ENCODE measurements at regions of chr11 and their contacts with region 1.

Region 1: DNA sequence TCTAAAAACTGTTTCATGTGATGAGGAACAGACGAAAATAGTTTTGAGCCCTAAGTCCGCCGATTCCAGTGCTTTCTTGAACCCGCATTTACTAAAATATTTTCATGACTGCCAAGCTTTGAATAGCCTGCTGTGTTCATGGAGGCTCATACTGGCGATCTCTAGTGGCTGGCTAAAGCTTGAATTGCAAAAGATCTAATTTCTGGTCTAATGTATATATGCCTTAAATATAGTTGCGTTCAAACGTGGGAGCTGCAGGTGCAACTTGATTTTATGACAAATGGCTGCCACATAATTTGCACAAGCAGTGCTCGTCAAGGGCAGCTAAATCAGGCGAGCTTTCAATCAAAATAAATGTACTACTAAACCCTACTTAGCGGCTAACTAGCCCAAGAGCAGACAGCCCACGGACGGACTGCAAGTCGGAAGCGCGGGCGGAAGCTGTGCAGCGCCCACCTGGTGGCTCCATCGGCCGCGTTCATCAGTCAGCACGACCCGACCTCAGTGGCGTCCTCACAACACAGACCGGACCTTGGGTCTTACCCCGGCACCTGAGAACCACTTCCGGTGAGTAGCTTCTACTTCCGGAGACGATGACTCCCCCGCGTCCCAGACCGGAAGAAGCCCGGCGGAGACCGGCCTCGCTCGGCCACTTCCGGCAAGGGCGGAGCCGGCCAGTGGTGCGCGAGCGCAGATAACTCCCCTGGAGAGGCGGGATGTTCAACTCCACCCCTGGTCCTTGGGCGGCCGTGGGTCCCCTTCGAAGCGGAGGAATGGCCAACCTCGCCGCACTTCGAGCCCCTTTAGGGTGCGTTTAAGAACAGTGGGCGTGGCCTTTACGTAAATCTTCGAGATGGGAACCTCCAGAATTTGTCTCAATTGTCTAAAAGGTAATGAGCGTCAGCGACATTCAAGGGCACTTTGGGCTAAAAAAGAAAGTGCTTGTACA is 6.1 kb downstream of the RPL27A start:
- DNase-seq: peak; percentile 91 to 99 (median 94)

Region 2: GRCh38 chr11:8813658-8814057 is 125.0 kb after region 1 on chr11:
- intact Hi-C with region 1: loop called (anchors 5 kb)
- DNase-seq: peak; percentile 40 to 96 (median 73)

Region 3: DNA sequence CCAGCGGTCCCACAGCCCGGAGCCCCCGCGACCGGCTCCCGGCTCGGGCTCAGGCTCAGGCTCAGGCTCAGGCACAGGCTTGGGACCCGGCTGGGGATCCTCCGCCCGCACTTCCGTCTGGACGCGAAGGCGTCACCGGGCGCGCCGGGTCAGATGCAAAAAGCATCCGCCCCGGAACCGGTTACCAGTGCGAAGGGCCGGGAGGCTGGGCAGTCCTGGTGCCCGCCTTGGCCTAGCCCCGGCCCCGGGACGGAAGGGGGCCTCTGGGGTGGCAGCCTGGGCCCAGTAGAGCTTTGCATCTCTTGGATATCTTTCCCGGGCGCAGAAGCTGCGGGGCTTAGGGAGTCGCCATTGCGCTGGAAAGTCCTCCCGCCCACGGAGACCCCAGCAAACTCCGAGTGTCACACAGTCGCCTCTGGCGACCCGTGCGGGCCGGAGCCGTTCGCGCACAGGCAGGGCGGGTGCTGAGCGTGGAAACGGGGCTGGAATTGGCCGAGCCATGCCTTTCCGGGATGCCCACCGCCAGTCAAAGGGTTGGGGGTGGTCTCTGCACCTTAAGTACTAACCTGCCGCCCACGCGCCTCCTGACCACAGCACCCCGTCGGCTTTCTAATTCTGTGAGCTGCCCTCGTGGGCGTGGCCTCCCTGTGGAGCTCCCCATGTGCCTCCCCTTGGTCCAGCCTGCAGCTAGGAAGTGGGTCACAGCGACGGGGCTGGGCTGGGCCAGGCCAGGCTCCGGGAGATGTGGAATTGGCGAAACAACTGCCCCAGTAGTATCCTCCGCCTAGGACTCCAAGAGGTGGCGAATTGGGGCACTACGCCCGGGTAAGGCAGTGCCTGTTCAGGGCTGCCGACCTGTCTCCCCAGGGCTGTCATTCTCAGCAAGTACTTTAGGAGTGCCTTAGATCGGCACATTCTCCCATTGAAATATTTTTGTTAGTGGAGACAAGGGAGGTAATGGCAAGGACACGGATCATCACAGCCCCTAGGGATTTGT is 275.9 kb after region 1 on chr11 and contains the start of gene TMEM9B:
- intact Hi-C with region 1: loop called (anchors 10 kb)
- DNase-seq: peak; percentile 83 to 98 (median 92)

Region 4: DNA sequence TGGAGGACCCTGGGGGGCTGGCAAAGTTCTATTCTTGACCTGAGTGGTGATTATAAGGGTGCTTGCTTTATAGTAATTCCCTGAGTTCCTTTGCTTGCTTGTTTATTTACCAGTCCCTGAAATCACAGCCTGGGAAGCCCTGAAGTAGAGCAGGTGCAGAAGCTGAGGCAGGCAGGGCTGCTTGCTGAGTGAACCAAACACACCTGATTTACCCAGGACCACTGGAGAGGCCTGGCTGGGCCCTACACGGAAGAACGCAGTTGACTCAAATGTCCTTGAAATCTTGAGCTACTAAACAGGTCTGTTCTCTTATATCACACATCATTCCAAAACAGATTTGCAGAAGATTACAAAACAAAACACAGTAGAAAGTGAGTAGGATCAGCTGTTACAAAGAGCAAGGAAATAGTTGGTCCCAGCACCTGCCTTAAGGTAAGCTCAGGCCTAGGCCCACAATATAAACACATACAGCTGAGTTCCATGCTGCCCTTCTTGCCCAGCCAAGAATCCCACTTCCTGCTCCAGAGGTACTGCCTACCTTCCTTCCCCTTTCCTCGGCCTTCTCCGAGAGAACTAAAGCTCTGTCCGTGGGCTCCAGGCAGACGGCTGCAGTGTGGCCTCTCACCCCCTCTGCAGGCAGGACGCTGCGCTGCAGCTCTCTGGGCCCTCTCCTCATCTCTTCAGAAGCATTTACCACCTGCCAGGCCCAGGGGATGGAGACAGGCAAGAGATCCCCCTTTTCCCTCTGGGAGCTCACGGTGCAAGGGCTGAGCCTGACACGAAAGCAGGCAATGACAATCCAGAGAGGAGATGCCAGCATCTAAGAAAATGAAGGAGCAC is 448.8 kb after region 1 on chr11:
- intact Hi-C with region 1: loop called (anchors 10 kb)
- DNase-seq: peak; percentile 61 to 97 (median 82)

Measured in posterior cingulate gyrus (tissue), 11 donors.